Ascending aorta (tissue), 2 donors: ENCODE measurements at regions of chr11 and their contacts with region 1.

Region 1: GRCh38 chr11:44611687-44612434 is 46.4 kb downstream of the CD82 start:
- DNase-seq: no peak
- H3K4me3 ChIP-seq: no peak overlapping the region
- H3K27ac ChIP-seq: peak overlapping the region; percentile 33 to 58
- H3K4me1 ChIP-seq: peaks cover 22 to 54% of the 10 kb centered on the region in 2 donors
- H3K27me3 ChIP-seq: no peaks in the 10 kb centered on the region
- CTCF ChIP-seq: no peak

Region 2: DNA sequence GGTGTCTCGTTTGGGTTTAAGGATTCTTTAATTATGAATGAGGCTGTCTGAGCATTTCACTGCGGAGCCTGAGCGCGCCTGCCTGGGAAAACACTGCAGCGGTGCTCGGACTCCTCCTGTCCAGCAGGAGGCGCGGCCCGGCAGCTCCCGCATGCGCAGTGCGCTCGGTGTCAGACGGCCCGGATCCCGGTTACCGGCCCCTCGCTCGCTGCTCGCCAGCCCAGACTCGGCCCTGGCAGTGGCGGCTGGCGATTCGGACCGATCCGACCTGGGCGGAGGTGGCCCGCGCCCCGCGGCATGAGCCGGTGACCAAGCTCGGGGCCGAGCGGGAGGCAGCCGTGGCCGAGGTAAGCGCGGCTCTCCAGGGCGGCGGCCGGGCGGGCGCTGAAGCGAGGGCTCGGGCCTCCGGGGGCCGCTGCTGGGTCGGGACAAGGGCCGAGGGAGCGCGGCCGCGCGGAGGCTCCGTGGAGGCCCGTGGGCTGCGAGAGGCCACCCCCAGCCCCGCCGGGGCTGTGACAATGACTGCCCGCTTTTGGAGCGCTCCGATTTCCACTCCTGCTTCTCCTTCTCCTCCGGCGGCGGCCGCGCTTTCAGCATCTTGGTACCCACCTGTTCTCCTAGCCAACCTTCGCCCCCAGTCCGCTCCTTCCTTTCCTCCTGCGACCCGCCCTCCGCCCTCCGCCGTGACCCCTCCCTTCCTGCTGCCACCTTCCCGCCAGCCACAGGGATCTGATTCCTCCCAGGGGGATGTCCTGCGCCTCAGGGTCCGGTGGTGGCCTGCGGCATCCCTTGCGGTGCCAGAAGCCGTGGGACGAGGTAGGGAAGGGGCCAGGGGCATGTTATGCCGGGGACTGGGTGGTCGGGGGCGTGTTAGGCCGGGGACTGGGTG is 516.1 kb before region 1 on chr11 and contains the start of gene EXT2:
- intact Hi-C with region 1: loop called (anchors 10 kb)
- DNase-seq: peak; percentile 18 to 91
- H3K4me3 ChIP-seq: peak within 1 kb of the TSS; percentile 78 to 94
- H3K27ac ChIP-seq: peak within 1 kb of the TSS; percentile 69 to 71
- H3K4me1 ChIP-seq: peaks cover 0 to 9% of the 10 kb centered on the region in 2 donors
- H3K27me3 ChIP-seq: no peaks in the 10 kb centered on the region
- CTCF ChIP-seq: peak; percentile 74 to 88 (median 87)
- total RNA-seq, gene EXT2: 342 TPM

Region 3: DNA sequence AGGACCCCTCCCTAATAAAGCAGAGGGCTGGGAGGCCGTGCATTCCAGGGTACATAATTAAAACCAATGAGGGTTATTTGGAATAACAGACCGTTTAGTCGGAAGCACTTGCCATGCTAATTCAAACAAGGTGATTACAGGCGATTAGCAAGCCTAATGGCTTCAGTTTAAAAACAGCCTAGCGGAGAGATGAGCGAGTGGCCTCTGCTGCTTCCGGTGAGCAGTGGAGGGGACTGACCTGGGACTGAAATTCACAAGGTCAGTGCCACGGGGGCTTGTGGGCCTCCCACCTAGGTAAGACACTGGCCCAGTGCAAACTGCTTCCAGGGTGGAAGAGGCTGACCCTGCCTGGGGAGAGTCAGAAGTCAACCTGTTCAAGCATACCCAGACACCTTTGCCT is 245.1 kb before region 1 on chr11:
- intact Hi-C with region 1: no loop called
- DNase-seq: no peak
- H3K4me3 ChIP-seq: no peak overlapping the region
- H3K27ac ChIP-seq: no peak overlapping the region
- H3K4me1 ChIP-seq: no peaks in the 10 kb centered on the region
- H3K27me3 ChIP-seq: no peaks in the 10 kb centered on the region
- CTCF ChIP-seq: no peak

Region 4: GRCh38 chr11:44379141-44380008 is 232.5 kb before region 1 on chr11:
- intact Hi-C with region 1: no loop called
- DNase-seq: no peak
- H3K4me3 ChIP-seq: no peak overlapping the region
- H3K27ac ChIP-seq: no peak overlapping the region
- H3K4me1 ChIP-seq: no peaks in the 10 kb centered on the region
- H3K27me3 ChIP-seq: no peaks in the 10 kb centered on the region
- CTCF ChIP-seq: no peak

Region 5: GRCh38 chr11:44592125-44592940 is 19.5 kb before region 1 on chr11:
- intact Hi-C with region 1: loop called (anchors 2 kb)
- DNase-seq: peak; percentile 39 to 93
- H3K4me3 ChIP-seq: no peak overlapping the region
- H3K27ac ChIP-seq: peak overlapping the region; percentile 86 to 90
- H3K4me1 ChIP-seq: peaks cover 23 to 42% of the 10 kb centered on the region in 2 donors
- H3K27me3 ChIP-seq: no peaks in the 10 kb centered on the region
- CTCF ChIP-seq: no peak

Region 6: GRCh38 chr11:44760917-44761550 is 149.2 kb after region 1 on chr11:
- intact Hi-C with region 1: loop called (anchors 10 kb)
- DNase-seq: peak in 1 of 2 donors; percentile 81
- H3K4me3 ChIP-seq: no peak overlapping the region
- H3K27ac ChIP-seq: no peak overlapping the region
- H3K4me1 ChIP-seq: peaks cover 4 to 25% of the 10 kb centered on the region in 2 donors
- H3K27me3 ChIP-seq: no peaks in the 10 kb centered on the region
- CTCF ChIP-seq: no peak